ENCODE measurements at regions of chr5 and their contacts with region 1.

Region 1: DNA sequence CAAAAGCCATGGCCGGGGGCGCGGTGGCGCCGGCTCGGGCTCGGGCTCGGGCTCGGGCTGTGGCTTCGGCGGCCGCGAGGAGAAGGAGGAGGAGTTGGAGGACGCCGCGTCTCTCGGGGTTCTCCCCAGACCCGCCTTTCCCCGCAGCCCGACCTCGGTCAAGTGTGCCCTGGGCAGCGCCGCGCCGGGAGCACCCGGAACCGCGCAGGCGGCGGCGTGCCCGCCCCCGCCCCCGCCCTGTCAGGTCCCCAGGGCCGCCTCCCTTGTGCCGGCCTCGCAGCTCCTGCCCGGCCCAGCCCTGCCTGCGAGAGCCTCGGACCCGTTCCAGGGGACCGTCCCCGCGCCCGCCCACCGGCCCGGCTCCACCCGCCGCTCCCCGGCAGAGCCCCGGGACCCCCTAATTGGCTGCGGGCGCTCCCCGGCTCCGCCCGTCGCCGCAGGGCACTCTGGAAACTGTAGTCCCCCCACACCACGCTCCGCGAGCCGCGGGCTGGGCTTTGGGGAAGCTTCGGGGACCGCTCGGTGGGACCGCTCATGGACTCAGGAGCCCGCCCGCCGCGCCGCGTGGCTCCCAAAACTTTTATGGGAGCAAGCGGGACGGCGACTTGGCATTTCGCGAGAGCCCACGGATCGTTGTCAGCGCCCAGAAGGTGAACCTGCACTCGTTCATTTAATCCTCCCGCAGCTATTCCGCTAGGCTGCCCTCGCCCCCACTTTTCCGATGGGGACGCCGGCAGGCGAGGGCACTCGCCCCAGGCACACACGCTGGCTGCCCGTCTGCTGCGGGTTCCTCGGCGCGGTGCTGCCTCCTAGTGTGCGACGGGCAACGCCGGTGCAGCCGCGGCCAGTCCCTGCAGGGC is at the start of gene STK10:
- DNase-seq: peak; percentile 84 to 95 (median 90)
- ATAC-seq: peak; percentile 75 to 81
- H3K4me3 Mint-ChIP-seq: peak within 1 kb of the TSS; percentile 97 to 100 (median 99)
- H3K27ac Mint-ChIP-seq: peak within 1 kb of the TSS; percentile 95 to 100 (median 98)
- H3K4me1 Mint-ChIP-seq: peaks cover 15 to 39% (median 31%) of the 10 kb centered on the region in 4 donors
- H3K27me3 Mint-ChIP-seq: no peaks in the 10 kb centered on the region
- polyA plus RNA-seq, gene STK10: 44.6 to 128 (median 62.1) TPM

Region 2: DNA sequence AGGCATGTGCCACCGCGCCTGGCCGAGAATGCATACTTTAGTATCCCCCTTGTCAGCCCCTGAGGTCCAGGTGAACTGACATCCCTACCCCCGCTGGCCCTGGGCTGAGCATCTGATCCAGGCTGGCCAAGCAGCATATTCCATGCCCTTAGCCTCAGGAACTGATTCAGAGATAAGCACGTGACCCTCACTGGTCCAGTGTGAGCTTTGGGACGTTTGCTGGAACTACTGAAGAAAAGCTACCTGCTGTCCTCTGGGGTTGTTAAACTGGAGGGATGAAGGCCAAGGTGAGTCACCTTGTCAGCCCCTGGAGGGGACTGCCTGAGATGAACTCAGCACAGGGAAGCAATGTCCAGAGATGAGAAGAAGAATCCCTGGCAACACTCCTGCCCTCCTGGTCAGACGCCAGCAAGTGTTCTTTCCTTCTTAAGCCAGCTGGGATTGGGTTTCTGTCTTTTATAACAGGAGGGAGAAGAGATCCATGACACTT is 122.7 kb before region 1 on chr5:
- POLR2A ChIA-PET with region 1: interaction called, 43 read pairs
- DNase-seq: no peak
- ATAC-seq: no peak
- H3K4me3 Mint-ChIP-seq: peak overlapping the region in 9 of 10 donors; percentile 8 to 88 (median 77)
- H3K27ac Mint-ChIP-seq: peak overlapping the region; percentile 92 to 99 (median 96)
- H3K4me1 Mint-ChIP-seq: peaks cover 38 to 76% (median 73%) of the 10 kb centered on the region in 4 donors
- H3K27me3 Mint-ChIP-seq: no peaks in the 10 kb centered on the region

Region 3: DNA sequence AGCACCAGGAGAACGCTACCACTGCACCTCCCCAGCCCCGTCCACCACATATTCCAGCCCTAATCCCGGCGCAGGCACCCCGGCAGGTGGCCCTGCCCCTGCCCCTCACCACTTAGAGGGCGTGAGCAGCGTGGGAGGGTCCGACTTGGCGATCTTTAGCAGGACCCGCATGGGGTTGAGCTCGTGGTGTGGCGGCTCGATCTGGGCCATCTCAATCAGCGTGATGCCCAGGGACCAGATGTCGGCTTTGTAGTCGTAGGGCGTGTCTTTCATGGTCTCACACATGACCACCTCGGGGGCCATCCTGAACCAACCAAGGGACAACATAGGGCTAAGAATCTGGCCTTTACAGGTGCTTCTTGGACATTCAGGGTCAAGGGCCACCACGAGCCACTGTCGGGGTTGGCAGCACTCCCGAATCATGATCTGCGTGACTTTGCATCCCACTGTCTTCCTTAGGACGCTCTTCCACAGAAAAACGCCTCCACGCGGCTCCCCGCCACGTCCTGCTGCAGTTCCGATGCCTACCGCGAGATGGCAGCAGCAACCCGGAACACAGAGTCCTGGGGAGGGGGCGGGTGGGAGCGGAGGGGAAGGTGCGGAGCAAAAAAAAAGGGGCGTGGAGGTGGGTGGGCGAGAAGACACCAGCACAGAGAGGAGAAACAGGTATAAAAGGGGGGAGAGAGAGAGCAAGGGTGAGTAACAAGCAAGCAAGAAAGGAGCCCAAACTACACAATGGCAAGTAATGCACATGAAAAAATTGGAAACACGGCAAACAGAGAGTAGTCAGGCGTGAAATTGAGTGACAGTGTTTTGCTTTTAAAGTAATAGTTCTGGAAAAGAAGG is 81.5 kb before region 1 on chr5:
- POLR2A ChIA-PET with region 1: interaction called, 359 read pairs
- DNase-seq: peak; percentile 39 to 81 (median 64)
- ATAC-seq: peak; percentile 17 to 18
- H3K4me3 Mint-ChIP-seq: peak overlapping the region in 9 of 10 donors; percentile 4 to 69 (median 38)
- H3K27ac Mint-ChIP-seq: peak overlapping the region; percentile 55 to 93 (median 88)
- H3K4me1 Mint-ChIP-seq: peaks cover 21 to 61% (median 50%) of the 10 kb centered on the region in 4 donors
- H3K27me3 Mint-ChIP-seq: no peaks in the 10 kb centered on the region

Region 4: DNA sequence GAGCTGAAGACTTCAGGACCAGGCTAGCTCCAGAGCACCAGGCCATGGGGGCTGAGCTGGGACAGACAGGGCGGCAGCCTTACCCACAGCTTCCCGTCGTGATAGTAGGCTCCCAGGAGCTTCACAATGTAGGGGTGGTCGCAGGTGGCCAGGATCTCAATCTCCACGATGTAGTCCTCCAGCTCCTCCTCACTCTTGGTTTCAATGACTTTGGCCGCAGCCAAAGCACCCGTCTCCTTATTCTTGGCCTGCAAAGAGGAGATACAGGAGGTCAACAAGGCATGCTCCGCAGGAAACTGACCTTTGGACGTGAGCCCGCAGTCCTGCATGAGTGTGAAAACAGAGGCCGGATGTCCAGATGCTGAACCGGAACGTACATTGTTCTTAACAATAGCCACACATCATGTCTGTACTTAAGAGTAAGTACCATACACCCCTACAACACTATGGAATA is 31.7 kb before region 1 on chr5:
- POLR2A ChIA-PET with region 1: interaction called, 17 read pairs
- DNase-seq: no peak
- ATAC-seq: no peak
- H3K4me3 Mint-ChIP-seq: peak overlapping the region in 2 of 10 donors; percentile 0 to 39
- H3K27ac Mint-ChIP-seq: peak overlapping the region in 8 of 10 donors; percentile 29 to 88 (median 76)
- H3K4me1 Mint-ChIP-seq: peaks cover 46 to 86% (median 81%) of the 10 kb centered on the region in 4 donors
- H3K27me3 Mint-ChIP-seq: no peaks in the 10 kb centered on the region

Region 5: GRCh38 chr5:172167895-172168294 is 20.4 kb before region 1 on chr5:
- POLR2A ChIA-PET with region 1: interaction called, 721 read pairs
- DNase-seq: no peak
- ATAC-seq: no peak
- H3K4me3 Mint-ChIP-seq: peak overlapping the region in 9 of 10 donors; percentile 24 to 83 (median 62)
- H3K27ac Mint-ChIP-seq: peak overlapping the region; percentile 83 to 100 (median 92)
- H3K4me1 Mint-ChIP-seq: peaks cover 39 to 93% (median 89%) of the 10 kb centered on the region in 4 donors
- H3K27me3 Mint-ChIP-seq: no peaks in the 10 kb centered on the region

Region 6: DNA sequence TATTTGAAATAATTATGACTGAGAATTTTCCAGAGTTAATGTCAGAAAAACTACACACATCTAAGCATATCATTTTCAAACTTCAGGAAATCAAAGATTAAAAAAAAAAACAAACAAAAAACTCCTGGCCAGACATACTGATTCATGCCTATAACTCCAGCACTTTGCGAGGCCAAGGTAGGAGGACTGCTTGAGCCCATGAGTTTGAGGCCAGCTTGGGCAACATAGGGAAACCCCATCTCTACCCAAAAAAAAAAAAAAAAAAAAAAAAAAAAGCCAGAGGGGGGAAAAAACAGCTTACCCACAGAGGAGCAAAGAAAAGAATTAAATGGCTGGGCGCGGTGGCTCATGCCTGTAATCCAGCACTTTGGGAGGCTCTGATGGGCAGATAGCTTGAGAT is 28.1 kb after region 1 on chr5:
- POLR2A ChIA-PET with region 1: no interaction called
- DNase-seq: no peak
- ATAC-seq: no peak
- H3K4me3 Mint-ChIP-seq: no peak overlapping the region
- H3K27ac Mint-ChIP-seq: peak overlapping the region in 1 of 10 donors; percentile 36
- H3K4me1 Mint-ChIP-seq: peaks cover 0 to 5% (median 1%) of the 10 kb centered on the region in 4 donors
- H3K27me3 Mint-ChIP-seq: no peaks in the 10 kb centered on the region